K562 (cell line): ENCODE measurements at regions of chr3 and their contacts with region 1.

Region 1: DNA sequence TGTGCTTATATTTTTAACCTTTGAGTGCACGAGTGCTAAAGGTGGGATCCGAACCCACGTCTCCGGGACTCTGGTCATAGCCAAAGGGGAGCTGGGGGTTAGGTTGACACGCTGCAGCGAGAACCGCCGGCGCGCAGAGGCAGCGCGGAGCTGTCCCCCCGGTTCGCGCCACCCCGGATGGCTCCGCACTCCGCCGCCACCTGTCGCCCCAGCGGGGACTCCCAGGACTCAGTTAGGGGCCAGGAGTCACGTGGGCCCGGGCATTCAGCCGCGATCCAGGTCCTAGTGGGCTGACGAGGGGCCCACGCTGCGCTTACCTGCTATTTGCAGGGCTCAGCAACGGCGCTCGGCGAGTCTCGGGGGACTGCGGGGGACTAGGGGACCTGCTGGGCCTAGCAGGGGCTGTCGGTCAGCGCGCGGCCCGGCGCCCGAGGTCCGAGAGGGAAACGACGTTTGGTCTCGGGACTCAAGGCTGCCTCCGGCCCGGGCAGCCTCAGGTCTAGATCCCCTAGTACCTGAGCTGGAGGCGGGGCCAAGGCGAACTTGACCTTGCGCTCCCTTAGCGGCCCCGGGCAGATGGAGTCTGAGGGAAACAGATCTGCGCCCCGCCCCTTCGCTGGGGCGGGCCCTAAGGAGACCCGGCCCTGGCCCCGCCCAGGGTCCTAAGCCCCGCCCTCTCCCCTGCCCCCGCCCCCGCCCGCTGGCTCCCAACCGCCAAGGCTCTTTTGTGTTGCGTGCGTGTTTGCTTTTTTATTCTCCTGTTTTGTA is at the start of gene NMNAT3:
- DNase-seq: peak; percentile 93 to 98 (median 97)
- ATAC-seq: peak; percentile 98
- H3K4me3 ChIP-seq: peak within 1 kb of the TSS; percentile 70
- H3K27ac ChIP-seq: peak within 1 kb of the TSS; percentile 81
- H3K4me1 ChIP-seq: peaks cover 7 to 9% of the 10 kb centered on the region in 2 experiments; a peak in 4 of 5 replicates
- H3K27me3 ChIP-seq: no peaks in the 10 kb centered on the region
- CTCF ChIP-seq: peak in 2 of 3 experiments; percentile 20 to 21; a peak in 1 of 6 replicates
- EP300 ChIP-seq: no peak
- POLR2A ChIP-seq: peak; percentile 80
- RAD21 ChIP-seq: no peak
- polyA plus RNA-seq, gene NMNAT3: 2.3 to 3.1 TPM

Region 2: DNA sequence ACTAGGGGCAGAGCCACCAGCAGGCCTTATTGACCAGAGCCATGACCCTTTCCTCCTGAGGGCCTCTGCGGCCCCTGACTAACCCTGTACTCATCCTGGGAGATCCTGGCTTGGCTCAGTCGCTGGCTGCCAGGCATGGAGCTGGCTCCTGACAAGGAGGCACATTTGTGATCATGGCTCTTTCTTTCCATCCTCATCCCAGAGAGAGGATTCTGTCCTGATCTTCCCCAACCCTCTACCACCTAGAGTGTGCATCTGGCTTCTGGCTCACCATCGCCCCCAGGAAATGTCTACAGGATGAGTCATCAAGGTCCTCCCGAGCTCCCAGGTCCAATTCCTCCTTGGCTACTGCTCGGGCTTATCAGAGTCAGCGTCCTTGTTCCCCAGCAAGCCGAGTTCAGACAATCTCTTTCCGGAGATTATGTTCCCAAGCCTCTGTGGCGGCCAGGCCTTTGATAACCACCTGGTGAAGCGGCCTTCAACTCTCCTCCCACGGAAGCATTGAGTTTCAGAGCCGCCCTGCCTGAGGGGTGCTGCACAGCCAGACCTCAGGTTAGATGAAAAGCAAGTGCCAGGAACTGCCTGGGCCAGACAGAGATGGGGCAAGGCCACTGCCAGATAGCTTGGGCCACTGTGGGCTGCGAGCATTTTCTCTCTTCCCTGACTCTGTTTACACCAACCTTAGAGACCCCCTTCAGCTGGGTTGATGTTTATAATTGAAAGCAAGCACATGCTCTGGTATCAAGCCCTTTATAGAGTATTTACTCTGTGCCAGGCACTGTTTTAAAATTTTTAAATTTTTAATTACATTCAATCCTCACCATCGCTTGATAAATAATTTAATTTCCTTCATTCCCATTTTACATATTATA is 378.1 kb before region 1 on chr3:
- CTCF ChIA-PET with region 1: no interaction called
- POLR2A ChIA-PET with region 1: no interaction called
- in situ Hi-C with region 1: no loop called
- intact Hi-C with region 1: no loop called
- DNase-seq: peak; percentile 92 to 98 (median 94)
- ATAC-seq: peak; percentile 94
- H3K4me3 ChIP-seq: no peak overlapping the region
- H3K27ac ChIP-seq: peak overlapping the region; percentile 84
- H3K4me1 ChIP-seq: peaks cover 35 to 54% of the 10 kb centered on the region in 2 experiments
- H3K27me3 ChIP-seq: no peaks in the 10 kb centered on the region; a peak in 1 of 5 replicates
- CTCF ChIP-seq: peak in 2 of 3 experiments; percentile 16 to 27; a peak in 2 of 6 replicates
- EP300 ChIP-seq: peak; percentile 98
- POLR2A ChIP-seq: 0 out of 2 replicates have a peak, but pooled peaks have one; percentile 45
- RAD21 ChIP-seq: peak in 1 of 2 experiments; percentile 39; a peak in 2 of 4 replicates

Region 3: DNA sequence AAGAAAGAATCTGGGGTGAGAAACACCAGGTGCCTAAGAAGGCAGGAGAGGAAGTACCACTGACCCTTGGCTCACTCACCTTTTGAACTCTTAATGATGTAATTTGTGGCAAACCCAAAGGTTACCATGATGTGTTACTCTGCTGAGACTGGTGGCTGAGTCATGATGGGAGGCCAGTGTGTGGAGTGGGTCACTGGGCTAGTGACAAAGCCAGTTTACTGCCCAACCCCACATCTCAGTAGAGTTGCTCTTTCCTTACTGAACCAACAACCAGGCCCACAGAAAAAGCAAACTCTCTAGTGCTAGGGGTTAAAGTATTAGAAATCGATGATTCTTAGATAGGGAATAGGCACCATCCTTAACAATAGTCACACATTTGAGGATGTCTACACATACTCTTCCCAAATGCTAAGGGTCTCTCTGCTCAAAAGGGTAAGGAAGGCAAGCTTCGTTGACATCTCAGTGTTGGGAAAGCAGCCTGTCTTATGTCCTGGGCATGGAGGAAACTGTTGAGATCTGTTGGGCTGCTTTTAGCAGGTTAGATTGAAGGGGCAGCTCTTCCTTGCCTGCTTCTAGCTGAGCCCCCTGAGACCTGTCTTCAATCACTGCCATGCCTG is 204.3 kb before region 1 on chr3:
- CTCF ChIA-PET with region 1: no interaction called
- POLR2A ChIA-PET with region 1: no interaction called
- in situ Hi-C with region 1: no loop called
- intact Hi-C with region 1: no loop called
- DNase-seq: peak in 1 of 4 experiments; percentile 6
- ATAC-seq: peak; percentile 73
- H3K4me3 ChIP-seq: no peak overlapping the region
- H3K27ac ChIP-seq: no peak overlapping the region
- H3K4me1 ChIP-seq: no peaks in the 10 kb centered on the region
- H3K27me3 ChIP-seq: no peaks in the 10 kb centered on the region
- CTCF ChIP-seq: no peak
- EP300 ChIP-seq: 0 out of 2 replicates have a peak, but pooled peaks have one; percentile 26
- POLR2A ChIP-seq: no peak
- RAD21 ChIP-seq: no peak

Region 4: DNA sequence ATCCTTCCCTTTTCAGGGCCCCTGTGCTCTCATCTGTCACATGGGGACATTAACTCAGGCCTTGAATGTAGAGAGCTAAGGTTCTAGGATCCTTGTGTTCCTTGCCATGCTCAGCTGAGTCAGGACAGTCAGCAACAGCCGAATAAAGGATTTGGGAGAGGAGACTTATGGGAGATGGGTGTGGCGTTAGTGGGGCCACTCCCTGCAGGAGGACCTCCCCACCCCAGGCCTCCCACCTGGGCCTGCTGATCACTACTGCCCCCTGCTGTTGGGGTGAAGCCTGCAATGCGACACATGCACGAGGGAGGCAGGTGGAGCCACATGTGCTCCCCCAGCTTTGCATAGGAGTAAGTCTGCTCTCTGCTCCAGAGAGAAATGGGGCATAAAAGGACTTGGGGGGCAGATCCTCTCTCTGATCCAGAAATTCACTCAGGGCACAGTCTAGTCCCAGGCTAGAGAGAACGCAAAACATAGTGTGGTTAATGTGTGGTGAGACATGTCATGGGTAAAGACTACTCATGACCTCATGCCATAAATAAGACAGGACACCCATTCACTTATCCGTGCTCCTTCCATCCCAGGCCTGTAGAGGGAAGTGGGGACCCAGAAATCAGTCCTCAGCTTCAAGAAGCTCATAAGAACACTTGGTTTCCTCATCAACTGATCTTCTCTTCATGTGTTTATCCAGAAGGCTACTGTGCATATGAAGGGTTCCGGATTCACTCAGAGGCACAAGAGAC is 157.4 kb before region 1 on chr3:
- CTCF ChIA-PET with region 1: no interaction called
- POLR2A ChIA-PET with region 1: interaction called, 4 read pairs
- in situ Hi-C with region 1: no loop called
- intact Hi-C with region 1: loop called (anchors 5 kb)
- DNase-seq: peak; percentile 84 to 95 (median 92)
- ATAC-seq: peak; percentile 98
- H3K4me3 ChIP-seq: no peak overlapping the region
- H3K27ac ChIP-seq: no peak overlapping the region; the same call in 2 of the 3 replicates
- H3K4me1 ChIP-seq: peaks cover 3% of the 10 kb centered on the region in 2 experiments; a peak in 3 of 5 replicates
- H3K27me3 ChIP-seq: peaks cover 4 to 7% of the 10 kb centered on the region in 2 experiments; a peak in 4 of 5 replicates
- CTCF ChIP-seq: peak; percentile 85 to 95 (median 91)
- EP300 ChIP-seq: no peak
- POLR2A ChIP-seq: no peak
- RAD21 ChIP-seq: peak; percentile 56 to 75

Region 5: DNA sequence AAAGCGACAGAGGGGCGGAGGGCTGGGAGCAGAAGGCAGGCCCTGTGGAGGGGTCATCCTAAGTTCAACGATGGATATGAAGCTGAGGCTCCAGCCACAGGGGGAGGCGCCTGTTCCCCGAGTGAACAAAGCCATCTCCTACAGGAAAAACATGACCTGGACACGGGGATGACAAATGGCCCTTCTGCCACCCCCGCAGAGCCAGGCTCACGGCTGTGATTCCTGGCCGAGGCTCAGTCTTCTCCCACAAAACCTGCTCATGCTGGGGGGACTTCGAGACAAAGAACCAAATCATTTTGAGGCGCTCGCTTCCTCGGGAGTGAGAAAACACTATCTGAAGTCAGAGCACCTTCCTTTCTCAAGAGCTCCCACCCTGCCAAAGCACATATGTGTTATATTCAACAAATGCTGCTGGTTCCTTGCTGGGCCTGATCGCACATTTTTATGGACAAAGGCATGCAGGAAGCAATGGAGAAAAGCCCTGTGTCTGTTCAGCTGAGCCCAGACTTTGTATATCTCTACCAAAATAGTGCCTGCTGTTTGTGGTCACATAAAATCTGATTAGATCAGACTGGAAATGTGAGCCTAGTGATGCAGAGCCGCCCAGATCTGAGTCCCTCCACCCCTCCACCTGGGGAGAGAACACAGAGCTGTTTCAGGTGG is 143.7 kb before region 1 on chr3:
- CTCF ChIA-PET with region 1: no interaction called
- POLR2A ChIA-PET with region 1: no interaction called
- in situ Hi-C with region 1: no loop called
- intact Hi-C with region 1: no loop called
- DNase-seq: peak; percentile 15 to 23 (median 18)
- ATAC-seq: peak; percentile 32
- H3K4me3 ChIP-seq: no peak overlapping the region
- H3K27ac ChIP-seq: no peak overlapping the region
- H3K4me1 ChIP-seq: peaks cover 6 to 17% of the 10 kb centered on the region in 2 experiments
- H3K27me3 ChIP-seq: peaks cover 14 to 40% of the 10 kb centered on the region in 2 experiments
- CTCF ChIP-seq: no peak
- EP300 ChIP-seq: no peak
- POLR2A ChIP-seq: no peak
- RAD21 ChIP-seq: no peak

Region 6: DNA sequence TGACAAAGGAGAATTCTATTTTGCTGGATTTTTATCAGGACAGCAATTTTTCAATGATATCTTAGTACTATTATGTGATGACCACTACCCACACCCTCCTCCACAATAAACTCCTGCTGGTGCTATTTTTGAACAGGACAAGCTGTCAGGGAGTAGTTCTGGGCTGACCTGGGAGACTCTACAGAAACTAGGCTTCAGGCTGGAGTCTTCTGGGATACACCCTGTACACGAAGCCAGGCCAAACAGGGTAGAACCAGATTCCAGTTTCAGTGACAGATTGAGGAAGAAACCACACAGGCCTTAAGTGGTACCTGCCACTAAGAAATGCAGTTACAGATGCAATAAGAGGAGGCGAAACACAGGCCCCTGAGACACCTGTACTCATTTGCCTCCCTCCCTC is 12.6 kb before region 1 on chr3:
- CTCF ChIA-PET with region 1: no interaction called
- POLR2A ChIA-PET with region 1: interaction called, 15 read pairs
- in situ Hi-C with region 1: no loop called
- intact Hi-C with region 1: no loop called
- DNase-seq: no peak
- ATAC-seq: no peak
- H3K4me3 ChIP-seq: no peak overlapping the region
- H3K27ac ChIP-seq: no peak overlapping the region
- H3K4me1 ChIP-seq: peaks cover 0 to 4% of the 10 kb centered on the region in 2 experiments; a peak in 1 of 5 replicates
- H3K27me3 ChIP-seq: no peaks in the 10 kb centered on the region
- CTCF ChIP-seq: no peak
- EP300 ChIP-seq: no peak
- POLR2A ChIP-seq: no peak
- RAD21 ChIP-seq: no peak